Mammary epithelial cell (primary cell): ENCODE measurements at regions of chr5 and their contacts with region 1.

Region 1: DNA sequence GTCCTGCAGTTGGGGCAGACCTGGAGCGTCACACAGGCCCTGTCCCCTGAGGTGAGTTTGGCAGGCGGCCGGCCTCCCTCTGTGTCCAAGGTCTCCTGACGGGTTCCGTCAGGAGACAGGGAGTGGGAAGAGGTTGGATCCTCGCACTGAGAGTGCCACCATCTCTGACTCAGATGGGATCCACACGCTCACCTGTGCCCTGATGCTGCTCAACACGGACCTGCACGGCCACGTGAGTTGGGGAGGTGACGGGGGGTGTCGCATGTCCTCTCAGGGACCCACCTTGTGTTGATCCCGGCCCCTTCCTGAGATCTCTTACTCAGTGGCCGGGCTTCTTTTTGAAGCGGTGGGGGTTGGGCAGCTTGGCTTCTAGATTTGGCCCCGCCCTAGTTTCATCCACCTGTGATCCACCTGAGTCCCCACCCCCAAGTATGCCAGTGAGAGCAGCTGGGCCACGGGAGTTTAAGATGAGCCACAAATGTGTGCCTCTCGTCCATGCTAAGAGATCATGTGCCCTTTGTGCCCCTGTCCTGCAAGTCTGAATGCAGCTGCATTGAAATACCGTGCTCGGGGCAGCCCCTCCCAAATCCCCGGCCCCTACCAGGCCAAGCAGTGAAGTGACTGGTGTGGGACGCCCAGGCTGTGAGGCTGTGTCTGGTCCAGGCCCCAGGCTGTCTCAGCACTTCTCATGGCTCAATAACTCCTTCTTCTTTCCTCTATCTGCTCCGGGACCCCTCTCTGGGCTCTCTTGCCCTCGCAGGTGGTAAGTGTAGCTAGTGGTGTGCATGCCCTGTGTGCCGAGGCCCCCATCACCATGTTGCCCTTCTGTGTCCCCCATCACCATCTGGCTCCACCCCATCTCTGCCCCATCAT is 27.2 kb downstream of the PSD2 start:
- DNase-seq: no peak
- H3K4me3 ChIP-seq: no peak overlapping the region
- H3K27ac ChIP-seq: no peak overlapping the region
- H3K4me1 ChIP-seq: no peaks in the 10 kb centered on the region
- H3K27me3 ChIP-seq: peaks cover 2% of the 10 kb centered on the region
- CTCF ChIP-seq: no peak

Region 2: GRCh38 chr5:139872052-139872766 is 49.4 kb after region 1 on chr5:
- CTCF ChIA-PET with region 1: no interaction called
- dilution Hi-C with region 1: no loop called
- in situ Hi-C with region 1: no loop called
- intact Hi-C with region 1: no loop called
- DNase-seq: no peak
- H3K4me3 ChIP-seq: no peak overlapping the region
- H3K27ac ChIP-seq: no peak overlapping the region
- H3K4me1 ChIP-seq: peaks cover 7% of the 10 kb centered on the region
- H3K27me3 ChIP-seq: no peaks in the 10 kb centered on the region
- CTCF ChIP-seq: peak in 1 of 2 donors; percentile 23

Region 3: DNA sequence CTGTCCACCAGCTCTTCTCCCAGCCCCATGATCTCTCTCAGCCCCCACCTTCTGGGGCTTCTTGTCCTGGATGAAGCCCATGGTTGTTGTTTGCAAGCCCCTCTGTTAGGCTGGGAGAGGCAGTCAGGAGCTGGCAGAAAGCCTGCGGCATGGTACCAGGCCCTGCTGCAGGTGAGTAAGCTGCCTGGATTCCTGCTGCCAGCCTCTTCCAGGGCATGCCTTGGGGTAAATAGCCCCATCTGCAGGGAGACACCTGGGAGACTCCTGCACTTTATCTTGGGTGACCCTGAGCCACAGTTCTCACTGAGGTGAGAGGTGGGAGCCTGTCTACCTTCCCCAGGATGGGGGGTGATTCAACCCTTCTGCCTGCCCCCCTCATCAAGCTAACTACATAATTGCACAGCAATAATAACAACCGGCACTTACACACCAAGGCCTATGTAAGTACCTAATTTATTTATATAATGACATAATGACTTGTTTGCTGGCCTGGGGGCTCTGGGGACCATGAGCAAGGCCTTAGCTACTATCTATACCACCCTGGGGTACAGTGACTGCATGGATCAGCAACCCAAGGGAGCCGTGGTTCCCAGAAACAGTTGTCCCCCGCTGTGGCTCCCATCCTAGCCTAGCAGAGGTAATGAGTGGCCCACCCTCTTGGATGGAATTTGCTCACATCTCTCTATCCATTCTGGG is 88.8 kb after region 1 on chr5:
- CTCF ChIA-PET with region 1: no interaction called
- dilution Hi-C with region 1: loop called (anchors 5 kb)
- in situ Hi-C with region 1: no loop called
- intact Hi-C with region 1: no loop called
- DNase-seq: peak; percentile 23
- H3K4me3 ChIP-seq: no peak overlapping the region
- H3K27ac ChIP-seq: no peak overlapping the region
- H3K4me1 ChIP-seq: peaks cover 8% of the 10 kb centered on the region
- H3K27me3 ChIP-seq: no peaks in the 10 kb centered on the region
- CTCF ChIP-seq: peak in 1 of 2 donors; percentile 17

Region 4: DNA sequence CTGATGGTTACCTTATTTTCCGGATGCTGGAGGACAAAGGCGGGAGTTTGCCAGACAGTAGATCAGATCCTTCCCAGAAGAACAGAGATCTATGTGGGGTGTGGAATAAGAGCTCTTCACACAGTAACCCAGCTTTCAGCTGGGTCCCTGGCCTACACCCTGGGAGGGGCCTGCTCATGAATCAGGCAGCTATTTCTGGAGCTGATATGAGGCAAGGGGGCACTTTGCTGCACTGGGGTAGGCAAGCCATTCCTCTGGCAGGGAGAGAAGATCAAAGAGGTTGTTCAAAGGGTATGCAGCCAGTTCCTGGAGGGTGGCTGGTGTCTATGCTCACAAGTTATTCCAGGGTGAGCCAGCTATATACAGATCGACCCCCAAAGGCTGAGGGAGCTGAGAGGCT is 400.8 kb after region 1 on chr5:
- CTCF ChIA-PET with region 1: no interaction called
- dilution Hi-C with region 1: no loop called
- in situ Hi-C with region 1: no loop called
- intact Hi-C with region 1: no loop called
- DNase-seq: no peak
- H3K4me3 ChIP-seq: no peak overlapping the region
- H3K27ac ChIP-seq: no peak overlapping the region
- H3K4me1 ChIP-seq: peaks cover 38% of the 10 kb centered on the region
- H3K27me3 ChIP-seq: no peaks in the 10 kb centered on the region
- CTCF ChIP-seq: no peak